GM12878 (cell line): ENCODE measurements at regions of chr15 and their contacts with region 1.

Region 1: GRCh38 chr15:81400640-81401236 is 26.7 kb upstream of the TMC3 start:
- DNase-seq: peak; percentile 23
- ATAC-seq: peak; percentile 73
- H3K4me3 ChIP-seq: no peak overlapping the region
- H3K27ac ChIP-seq: no peak overlapping the region
- H3K4me1 ChIP-seq: no peaks in the 10 kb centered on the region
- H3K27me3 ChIP-seq: no peaks in the 10 kb centered on the region; a peak in 1 of 4 replicates
- CTCF ChIP-seq: peak; percentile 70 to 77 (median 73)
- EP300 ChIP-seq: no peak
- POLR2A ChIP-seq: no peak
- RAD21 ChIP-seq: peak; percentile 91

Region 2: GRCh38 chr15:81111510-81112470 is 288.9 kb before region 1 on chr15:
- CTCF ChIA-PET with region 1: interaction called, 8 read pairs
- POLR2A ChIA-PET with region 1: no interaction called
- RAD21 ChIA-PET with region 1: interaction called, 3 read pairs
- SMC1A ChIA-PET with region 1: no interaction called
- in situ Hi-C with region 1: no loop called
- intact Hi-C with region 1: loop called (anchors 2 kb)
- DNase-seq: peak; percentile 43
- ATAC-seq: peak; percentile 96
- H3K4me3 ChIP-seq: no peak overlapping the region
- H3K27ac ChIP-seq: no peak overlapping the region
- H3K4me1 ChIP-seq: peaks cover 11% of the 10 kb centered on the region
- H3K27me3 ChIP-seq: no peaks in the 10 kb centered on the region
- CTCF ChIP-seq: no peak
- EP300 ChIP-seq: no peak
- POLR2A ChIP-seq: no peak
- RAD21 ChIP-seq: no peak

Region 3: DNA sequence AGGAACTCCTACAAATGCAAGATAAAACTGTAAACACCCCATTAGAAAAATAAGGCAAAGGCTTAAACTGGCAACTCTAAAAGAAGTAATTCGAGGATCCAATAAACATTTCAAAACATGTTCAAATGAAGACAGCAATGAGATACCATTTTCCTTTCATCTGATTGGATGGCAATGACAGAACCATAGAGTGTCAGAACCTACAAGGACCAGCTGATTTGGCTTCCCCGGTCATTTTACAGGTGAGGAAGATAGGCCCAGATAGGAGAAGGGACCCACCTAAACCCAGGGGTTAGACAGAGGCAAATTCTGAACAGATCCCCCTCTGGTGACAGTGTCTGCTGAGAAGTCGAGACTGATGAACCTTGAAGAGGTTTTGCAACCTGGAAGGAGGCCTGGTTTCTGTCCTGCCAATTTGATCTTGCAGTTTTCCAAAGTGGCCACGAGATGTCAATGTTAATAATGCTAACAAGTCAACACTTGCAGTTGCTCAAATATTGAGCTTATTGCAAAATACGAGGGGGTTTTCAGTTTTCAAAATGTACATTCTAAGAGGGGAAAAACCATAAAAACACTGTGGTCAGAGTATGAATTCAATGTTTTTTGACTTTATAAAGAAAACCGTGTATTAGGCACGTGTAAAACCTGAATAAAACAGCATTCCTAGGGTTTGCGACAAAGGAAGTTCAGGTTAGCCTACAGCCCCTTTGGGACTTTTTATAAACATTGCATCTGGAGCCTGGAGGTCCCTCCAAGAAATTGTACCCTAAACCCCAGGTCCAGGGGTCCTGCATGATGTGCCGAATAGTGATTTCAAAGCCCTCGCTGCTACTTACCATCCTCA is 245.1 kb before region 1 on chr15:
- CTCF ChIA-PET with region 1: no interaction called
- POLR2A ChIA-PET with region 1: no interaction called
- RAD21 ChIA-PET with region 1: no interaction called
- SMC1A ChIA-PET with region 1: interaction called, 4 read pairs
- in situ Hi-C with region 1: no loop called
- intact Hi-C with region 1: loop called (anchors 5 kb)
- DNase-seq: no peak
- ATAC-seq: peak; percentile 76
- H3K4me3 ChIP-seq: no peak overlapping the region
- H3K27ac ChIP-seq: no peak overlapping the region
- H3K4me1 ChIP-seq: no peaks in the 10 kb centered on the region
- H3K27me3 ChIP-seq: peaks cover 0 to 2% of the 10 kb centered on the region in 2 experiments; a peak in 1 of 4 replicates
- CTCF ChIP-seq: peak; percentile 55 to 63 (median 58); a peak in 5 of 6 replicates
- EP300 ChIP-seq: no peak
- POLR2A ChIP-seq: no peak
- RAD21 ChIP-seq: peak; percentile 66

Region 4: DNA sequence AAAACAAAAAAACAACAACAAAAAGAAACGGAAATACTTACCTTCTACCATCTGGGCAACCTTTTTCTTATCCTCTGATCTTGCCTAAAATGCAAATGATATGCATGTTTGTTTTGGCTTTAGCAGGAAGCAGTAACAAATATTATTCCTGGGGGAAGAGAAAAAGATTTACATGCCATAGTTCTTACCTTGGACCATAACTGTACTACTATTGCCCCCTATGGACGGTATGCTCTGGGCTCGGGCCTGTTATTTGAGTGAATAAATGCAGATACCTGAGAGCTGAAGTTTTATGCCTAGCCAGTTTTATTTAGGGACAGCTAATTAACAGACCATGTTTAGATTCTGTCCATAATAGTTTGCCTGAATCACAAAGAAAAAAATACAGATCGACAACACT is 64.2 kb before region 1 on chr15:
- CTCF ChIA-PET with region 1: interaction called, 9 read pairs
- POLR2A ChIA-PET with region 1: no interaction called
- RAD21 ChIA-PET with region 1: interaction called, 9 read pairs
- SMC1A ChIA-PET with region 1: interaction called, 5 read pairs
- in situ Hi-C with region 1: no loop called
- intact Hi-C with region 1: loop called (anchors 5 kb)
- DNase-seq: no peak
- ATAC-seq: peak; percentile 89
- H3K4me3 ChIP-seq: no peak overlapping the region
- H3K27ac ChIP-seq: no peak overlapping the region
- H3K4me1 ChIP-seq: no peaks in the 10 kb centered on the region; the same call in 1 of the 2 replicates
- H3K27me3 ChIP-seq: no peaks in the 10 kb centered on the region
- CTCF ChIP-seq: peak; percentile 57 to 73 (median 66); a peak in 5 of 6 replicates
- EP300 ChIP-seq: no peak
- POLR2A ChIP-seq: no peak
- RAD21 ChIP-seq: peak; percentile 83